Right lobe of liver (tissue), 6 donors: ENCODE measurements at regions of chr1 and their contacts with region 1.

Region 1: DNA sequence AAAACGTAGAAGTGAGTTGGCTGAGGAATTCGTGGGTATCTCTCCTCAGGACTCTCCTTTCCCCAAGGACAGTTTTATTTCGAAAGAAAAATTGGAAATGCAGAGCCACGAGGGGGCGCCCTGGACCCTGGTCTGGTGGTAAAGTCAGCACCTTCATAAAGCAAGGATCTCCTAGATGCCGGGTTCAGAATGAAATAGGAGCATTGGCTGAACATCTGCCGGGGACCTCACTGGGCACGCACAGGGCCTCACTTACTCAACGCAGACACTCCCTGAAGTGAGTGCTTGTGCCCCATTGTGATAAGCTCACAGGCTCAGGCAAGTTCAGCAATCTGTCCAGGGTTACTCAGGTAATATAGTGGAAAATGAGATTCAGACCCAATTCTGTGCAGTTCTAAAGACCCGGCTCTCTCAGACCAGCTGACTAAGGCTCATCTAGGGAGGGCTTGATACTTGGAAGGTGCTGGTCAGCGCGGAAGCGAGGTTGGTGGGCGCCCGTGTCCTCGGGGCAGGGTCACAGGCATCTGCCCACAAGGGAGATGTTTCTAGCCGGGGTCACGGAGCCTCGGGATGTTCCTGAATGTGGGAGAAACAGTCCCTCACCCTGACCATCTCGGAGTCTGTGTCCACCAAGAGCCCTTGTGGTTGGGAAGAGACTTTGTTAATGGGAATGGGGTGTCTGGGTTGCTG is 55.7 kb upstream of the ETV3 start:
- DNase-seq: peak in 2 of 3 donors; percentile 59 to 68
- ATAC-seq: peak; percentile 52 to 74 (median 70)
- H3K4me3 ChIP-seq: no peak overlapping the region
- H3K27ac ChIP-seq: no peak overlapping the region
- H3K4me1 ChIP-seq: no peaks in the 10 kb centered on the region
- H3K27me3 ChIP-seq: peaks cover 0 to 8% of the 10 kb centered on the region in 2 donors
- CTCF ChIP-seq: peak; percentile 54 to 76 (median 70)
- POLR2A ChIP-seq: no peak

Region 2: DNA sequence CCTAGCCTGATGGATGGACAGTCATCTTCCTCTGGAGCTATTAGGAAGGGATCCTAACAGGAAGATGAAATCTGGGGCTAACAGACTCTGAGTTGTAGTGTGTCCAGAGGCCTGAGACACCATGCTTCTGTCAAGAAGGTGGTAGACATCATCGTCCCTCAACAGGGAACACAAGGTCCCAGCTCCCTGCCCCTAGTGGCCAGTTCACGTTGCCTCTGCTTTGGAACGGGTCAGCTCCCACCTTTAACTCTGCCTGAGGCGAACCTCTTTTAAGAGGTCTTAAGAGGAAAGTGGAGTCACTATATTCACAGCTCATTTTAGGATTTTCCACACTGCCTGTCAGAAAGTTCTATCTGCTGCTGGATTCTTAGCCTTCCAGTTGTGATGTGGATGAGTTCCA is 245.1 kb before region 1 on chr1:
- intact Hi-C with region 1: no loop called
- DNase-seq: peak in 1 of 3 donors; percentile 12
- ATAC-seq: no peak
- H3K4me3 ChIP-seq: no peak overlapping the region
- H3K27ac ChIP-seq: no peak overlapping the region
- H3K4me1 ChIP-seq: no peaks in the 10 kb centered on the region
- H3K27me3 ChIP-seq: no peaks in the 10 kb centered on the region
- CTCF ChIP-seq: no peak
- POLR2A ChIP-seq: no peak

Region 3: DNA sequence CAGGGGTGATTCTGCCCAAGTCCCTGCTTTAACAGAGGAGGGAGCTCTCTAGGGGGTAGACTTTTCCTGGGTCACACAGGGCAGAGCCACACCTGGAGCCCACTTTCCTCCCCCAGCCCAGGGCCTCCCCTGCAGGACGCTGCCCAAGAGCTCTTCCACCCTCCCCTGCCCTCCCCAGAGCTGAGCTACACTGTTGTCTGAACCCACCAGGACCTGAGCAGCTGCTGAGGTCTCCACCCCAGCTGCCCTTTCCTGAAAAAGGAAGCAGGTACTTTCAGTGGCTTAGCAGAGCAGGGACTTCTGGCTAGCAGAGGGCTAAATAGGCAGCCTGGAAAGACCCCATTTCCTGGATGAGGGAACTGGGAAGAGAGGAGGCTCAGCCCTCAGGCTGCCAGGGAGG is 113.6 kb after region 1 on chr1:
- intact Hi-C with region 1: loop called in 1 of 2 experiments (anchors 10 kb)
- DNase-seq: no peak
- ATAC-seq: peak in 2 of 4 donors; percentile 18 to 26
- H3K4me3 ChIP-seq: no peak overlapping the region
- H3K27ac ChIP-seq: no peak overlapping the region
- H3K4me1 ChIP-seq: peaks cover 0 to 9% (median 4%) of the 10 kb centered on the region in 4 donors
- H3K27me3 ChIP-seq: no peaks in the 10 kb centered on the region
- CTCF ChIP-seq: no peak
- POLR2A ChIP-seq: no peak

Region 4: DNA sequence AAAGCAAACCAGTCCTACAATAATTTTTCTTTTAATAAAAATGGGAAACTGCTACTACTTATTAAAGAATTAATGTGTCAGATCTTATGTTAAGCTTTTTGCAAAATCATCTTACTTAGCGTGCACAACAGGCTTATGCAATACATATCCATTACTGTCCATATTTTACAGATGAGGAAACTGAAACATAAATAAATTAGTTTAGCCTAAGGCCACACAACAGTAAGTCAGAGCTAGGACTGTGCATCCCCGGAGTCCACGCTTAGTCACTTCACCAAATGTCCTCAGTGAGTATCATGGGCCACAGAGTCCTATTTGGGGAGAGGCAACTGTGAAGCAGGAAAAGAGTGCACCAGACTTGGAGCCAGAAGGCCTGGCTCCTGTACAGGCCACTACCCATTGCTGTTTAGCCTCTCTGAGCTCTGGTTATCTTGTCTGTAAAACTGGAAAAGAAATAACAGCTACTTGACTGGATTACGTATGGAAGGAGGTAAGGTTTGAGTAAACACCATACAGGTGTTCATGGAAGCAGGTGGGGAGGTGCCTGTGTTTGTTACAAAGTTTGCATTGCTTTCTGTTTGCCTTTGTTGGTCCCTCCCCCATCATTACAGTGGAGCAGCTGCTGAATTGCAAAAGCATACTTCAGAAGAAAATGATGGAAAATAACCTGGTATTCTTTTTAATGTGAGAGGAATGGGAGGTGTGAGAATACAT is 165.6 kb after region 1 on chr1:
- intact Hi-C with region 1: loop called in 1 of 2 experiments (anchors 10 kb)
- DNase-seq: no peak
- ATAC-seq: no peak
- H3K4me3 ChIP-seq: no peak overlapping the region
- H3K27ac ChIP-seq: no peak overlapping the region
- H3K4me1 ChIP-seq: no peaks in the 10 kb centered on the region
- H3K27me3 ChIP-seq: no peaks in the 10 kb centered on the region
- CTCF ChIP-seq: no peak
- POLR2A ChIP-seq: no peak